Calu3 (cell line): ENCODE measurements at regions of chr6 and their contacts with region 1.

Region 1: GRCh38 chr6:168895102-168895812 is 358.4 kb downstream of the THBS2 start:
- DNase-seq: peak; percentile 93
- H3K4me3 Mint-ChIP-seq: peak overlapping the region; percentile 65
- H3K27ac Mint-ChIP-seq: peak overlapping the region; percentile 86
- H3K4me1 Mint-ChIP-seq: peaks cover 29% of the 10 kb centered on the region
- H3K27me3 Mint-ChIP-seq: no peaks in the 10 kb centered on the region
- CTCF ChIP-seq: peak; percentile 89

Region 2: GRCh38 chr6:168658059-168658458 is 237.2 kb before region 1 on chr6:
- CTCF ChIA-PET with region 1: no interaction called
- intact Hi-C with region 1: no loop called
- DNase-seq: no peak
- H3K4me3 Mint-ChIP-seq: no peak overlapping the region
- H3K27ac Mint-ChIP-seq: no peak overlapping the region
- H3K4me1 Mint-ChIP-seq: peaks cover 8% of the 10 kb centered on the region
- H3K27me3 Mint-ChIP-seq: no peaks in the 10 kb centered on the region
- CTCF ChIP-seq: no peak

Region 3: DNA sequence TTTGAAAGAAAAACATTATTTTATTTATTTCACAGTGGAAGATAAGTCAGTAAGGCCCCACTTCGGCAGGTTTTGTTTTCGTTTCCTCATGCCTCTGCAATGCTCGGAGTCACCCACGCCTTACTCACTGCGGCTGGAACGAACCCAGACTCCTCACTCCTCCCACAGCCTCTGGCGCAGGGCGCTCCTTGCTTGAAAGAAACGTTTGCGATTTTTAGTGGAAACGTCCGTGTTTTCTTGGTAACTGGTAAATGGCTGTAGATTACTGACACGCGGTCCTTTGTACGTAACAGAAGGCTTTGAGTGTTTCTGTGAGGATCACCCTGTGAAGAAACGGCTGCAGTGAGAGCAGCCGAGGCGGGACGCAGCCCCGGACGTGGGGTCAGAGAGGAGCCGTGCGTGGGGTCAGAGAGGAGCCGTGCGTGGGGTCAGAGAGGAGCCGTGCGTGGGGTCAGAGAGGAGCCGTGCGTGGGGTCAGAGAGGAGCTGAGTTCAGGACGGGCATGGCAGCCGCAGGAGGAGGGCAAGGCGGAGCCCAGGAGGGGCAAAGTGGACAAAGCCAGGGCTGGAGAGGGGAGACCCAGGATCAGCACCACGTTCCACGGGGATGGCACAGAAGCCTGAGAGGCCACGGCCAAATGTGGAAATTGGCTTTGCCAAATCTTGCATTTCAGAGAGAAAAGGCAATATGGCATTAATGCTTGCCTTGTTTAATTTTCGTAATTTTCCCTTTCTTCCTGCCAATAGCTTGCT is 557.0 kb after region 1 on chr6:
- CTCF ChIA-PET with region 1: interaction called, 3 read pairs
- intact Hi-C with region 1: loop called (anchors 1 kb)
- DNase-seq: peak; percentile 65
- H3K4me3 Mint-ChIP-seq: peak overlapping the region; percentile 72
- H3K27ac Mint-ChIP-seq: peak overlapping the region; percentile 87
- H3K4me1 Mint-ChIP-seq: peaks cover 39% of the 10 kb centered on the region
- H3K27me3 Mint-ChIP-seq: no peaks in the 10 kb centered on the region
- CTCF ChIP-seq: no peak

Region 4: GRCh38 chr6:169701954-169702839 is 806.9 kb after region 1 on chr6 and contains the starts of genes C6orf120 and WDR27:
- CTCF ChIA-PET with region 1: no interaction called
- intact Hi-C with region 1: loop called (anchors 5 kb)
- DNase-seq: peak; percentile 96
- H3K4me3 Mint-ChIP-seq: peak within 1 kb of the TSS; percentile 94
- H3K27ac Mint-ChIP-seq: peak within 1 kb of the TSS; percentile 67
- H3K4me1 Mint-ChIP-seq: peaks cover 14% of the 10 kb centered on the region
- H3K27me3 Mint-ChIP-seq: no peaks in the 10 kb centered on the region
- CTCF ChIP-seq: no peak
- total RNA-seq, gene C6orf120: 20.9 and 25.0 TPM in 2 replicates
- total RNA-seq, gene WDR27: 70.6 and 77.9 TPM in 2 replicates

Region 5: GRCh38 chr6:170529839-170530469 is 1634.7 kb after region 1 on chr6:
- CTCF ChIA-PET with region 1: no interaction called
- intact Hi-C with region 1: loop called (anchors 10 kb)
- DNase-seq: peak; percentile 58
- H3K4me3 Mint-ChIP-seq: no peak overlapping the region
- H3K27ac Mint-ChIP-seq: no peak overlapping the region
- H3K4me1 Mint-ChIP-seq: no peaks in the 10 kb centered on the region
- H3K27me3 Mint-ChIP-seq: no peaks in the 10 kb centered on the region
- CTCF ChIP-seq: peak; percentile 48